Panc1 (cell line): ENCODE measurements at regions of chr10 and their contacts with region 1.

Region 1: DNA sequence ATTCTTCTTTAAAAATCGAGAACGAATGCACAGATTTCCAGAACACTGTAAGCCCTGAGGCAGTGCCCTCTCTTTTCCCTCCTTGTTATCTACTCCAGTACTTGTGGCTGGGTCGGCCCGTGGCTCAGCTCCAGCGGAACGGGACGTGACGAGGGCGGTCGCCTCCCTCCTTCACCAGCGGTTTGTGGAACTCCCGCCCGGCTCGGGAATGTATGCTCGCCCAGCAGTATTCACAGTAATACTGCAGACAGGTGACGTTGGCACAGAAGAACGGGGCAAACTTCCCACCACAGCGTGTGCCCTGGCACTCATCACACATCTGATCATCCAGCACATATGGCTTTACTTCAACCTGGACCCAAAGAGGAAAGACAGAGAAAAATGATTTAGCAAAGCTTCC is 128.5 kb downstream of the BTAF1 start:
- DNase-seq: no peak
- ATAC-seq: no peak
- H3K4me3 ChIP-seq: no peak overlapping the region
- H3K27ac ChIP-seq: no peak overlapping the region
- H3K4me1 ChIP-seq: no peaks in the 10 kb centered on the region
- H3K27me3 ChIP-seq: no peaks in the 10 kb centered on the region
- CTCF ChIP-seq: no peak

Region 2: GRCh38 chr10:91694170-91694794 is 357.8 kb before region 1 on chr10:
- CTCF ChIA-PET with region 1: no interaction called
- POLR2A ChIA-PET with region 1: no interaction called
- in situ Hi-C with region 1: no loop called
- intact Hi-C with region 1: no loop called
- DNase-seq: no peak
- ATAC-seq: no peak
- H3K4me3 ChIP-seq: no peak overlapping the region
- H3K27ac ChIP-seq: no peak overlapping the region
- H3K4me1 ChIP-seq: no peaks in the 10 kb centered on the region
- H3K27me3 ChIP-seq: no peaks in the 10 kb centered on the region
- CTCF ChIP-seq: peak; percentile 71

Region 3: GRCh38 chr10:92278996-92279696 is 227.1 kb after region 1 on chr10:
- CTCF ChIA-PET with region 1: interaction called, 13 read pairs
- POLR2A ChIA-PET with region 1: no interaction called
- in situ Hi-C with region 1: no loop called
- intact Hi-C with region 1: no loop called
- DNase-seq: no peak
- ATAC-seq: no peak
- H3K4me3 ChIP-seq: no peak overlapping the region
- H3K27ac ChIP-seq: no peak overlapping the region
- H3K4me1 ChIP-seq: no peaks in the 10 kb centered on the region
- H3K27me3 ChIP-seq: no peaks in the 10 kb centered on the region
- CTCF ChIP-seq: no peak